ENCODE measurements at regions of chr4 and their contacts with region 1.

Region 1: DNA sequence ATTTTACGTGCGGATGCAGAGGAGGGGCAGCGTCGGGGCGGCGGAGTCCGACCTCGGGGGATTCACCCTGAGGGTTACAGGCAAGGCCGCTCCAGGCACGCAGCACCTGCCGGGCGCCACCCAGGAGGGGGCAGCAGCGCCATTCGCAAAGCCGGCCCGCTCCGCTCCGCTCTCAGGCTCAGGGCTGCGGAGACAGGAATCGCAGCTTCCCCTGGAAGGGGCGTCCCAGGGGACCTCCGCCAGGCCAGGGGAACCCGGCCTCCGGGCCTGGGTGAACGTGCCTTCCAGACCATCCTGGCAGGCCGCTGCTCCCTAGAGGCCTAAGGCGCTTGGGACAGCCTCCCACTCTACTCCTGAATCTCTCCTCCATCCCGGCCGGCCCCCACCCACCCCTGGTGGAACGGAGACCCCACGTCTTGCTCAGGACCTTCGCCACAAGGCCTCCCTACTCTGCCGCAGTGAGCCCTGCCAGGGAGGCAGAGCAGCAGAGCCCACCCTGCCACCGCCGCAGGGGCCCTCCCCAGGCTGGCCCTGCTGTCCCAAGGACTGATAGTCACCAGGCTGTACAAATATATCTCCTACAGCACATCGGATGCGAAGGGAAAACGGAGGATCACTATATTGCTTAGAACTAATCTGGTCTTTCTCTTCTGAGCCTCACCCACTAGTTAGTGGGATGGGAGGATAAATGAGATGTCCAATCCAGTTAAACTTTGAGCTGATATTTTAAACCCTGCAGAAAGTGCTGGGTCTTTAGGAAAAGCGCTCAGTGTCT is 115.0 kb downstream of the SMIM20 start:
- DNase-seq: peak in 1 of 2 donors; percentile 86
- H3K4me3 ChIP-seq: peak overlapping the region in 1 of 2 donors; percentile 23
- H3K27ac ChIP-seq: peak overlapping the region; percentile 18
- H3K4me1 ChIP-seq: peaks cover 21% of the 10 kb centered on the region
- H3K27me3 ChIP-seq: no peaks in the 10 kb centered on the region
- CTCF ChIP-seq: peak; percentile 24 to 70 (median 60)
- POLR2A ChIP-seq: no peak

Region 2: GRCh38 chr4:26410385-26411293 is 381.7 kb after region 1 on chr4:
- intact Hi-C with region 1: loop called (anchors 10 kb)
- DNase-seq: no peak
- H3K4me3 ChIP-seq: no peak overlapping the region
- H3K27ac ChIP-seq: no peak overlapping the region
- H3K4me1 ChIP-seq: peaks cover 12% of the 10 kb centered on the region
- H3K27me3 ChIP-seq: no peaks in the 10 kb centered on the region
- CTCF ChIP-seq: peak; percentile 17 to 78 (median 67)
- POLR2A ChIP-seq: no peak

Measured in vagina (tissue), 2 donors.